Posterior cingulate gyrus (tissue), 11 donors: ENCODE measurements at regions of chr11 and their contacts with region 1.

Region 1: DNA sequence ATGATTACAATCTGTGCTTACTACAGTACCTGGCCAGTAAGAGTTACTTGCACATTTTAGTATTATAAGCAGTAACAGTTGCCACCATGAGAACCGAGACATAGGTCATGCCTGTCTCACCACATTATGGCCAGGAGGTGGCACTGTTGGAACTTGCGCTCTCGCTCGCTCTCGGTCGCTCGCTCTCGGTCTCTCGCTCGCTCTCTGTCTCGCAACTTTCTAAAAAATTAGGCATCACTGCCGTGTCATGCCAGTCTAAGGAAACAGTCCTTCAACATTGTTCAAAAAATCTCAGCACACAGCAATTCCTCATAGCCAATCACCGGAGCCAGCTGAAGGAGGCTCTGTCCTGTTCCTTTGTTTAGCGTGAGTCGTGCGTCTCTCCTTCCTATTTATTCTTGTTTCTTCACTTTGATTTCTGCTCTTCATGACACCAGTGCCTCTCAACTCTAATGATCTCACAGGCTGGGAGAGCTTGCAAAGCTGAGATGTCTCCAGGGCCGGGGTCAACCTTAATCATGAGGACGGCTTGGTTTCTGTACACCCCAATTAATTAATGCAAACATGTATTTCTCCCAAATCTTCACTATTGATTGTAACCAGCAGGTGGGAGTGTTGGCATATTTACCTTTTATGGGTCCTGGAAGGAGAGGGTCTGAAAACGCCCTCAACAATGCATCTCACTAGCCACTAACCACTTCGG is 6.3 kb upstream of the ADAMTS8 start:
- DNase-seq: peak; percentile 67 to 97 (median 79)

Region 2: DNA sequence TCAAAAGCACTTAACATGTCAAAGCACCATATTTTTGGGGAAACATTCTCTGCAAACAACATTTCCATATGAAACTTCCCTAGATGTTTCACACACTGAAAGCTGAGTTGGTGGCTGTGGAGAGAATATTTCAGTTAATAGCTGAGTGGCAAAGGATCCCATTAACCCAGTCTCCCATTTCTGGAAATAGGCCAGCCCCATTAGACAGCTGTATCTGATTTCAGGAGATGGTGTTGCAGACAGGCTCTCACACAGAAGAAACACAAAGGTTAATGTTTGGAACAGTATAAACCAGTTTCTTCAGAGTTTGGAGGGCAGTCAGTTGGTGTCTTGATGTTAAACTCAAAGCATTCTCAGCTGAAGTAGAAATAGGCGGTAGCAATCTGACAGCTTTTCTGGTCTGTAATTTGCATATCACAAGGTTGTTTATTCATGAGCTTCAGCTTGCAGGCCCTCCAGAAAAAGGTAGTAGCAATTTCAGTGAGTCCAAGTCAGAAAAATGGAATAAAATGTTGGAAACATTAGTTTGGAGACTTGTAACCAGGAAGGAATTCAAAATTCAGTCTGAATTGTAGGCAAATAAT is 104.5 kb before region 1 on chr11:
- intact Hi-C with region 1: no loop called
- DNase-seq: no peak

Region 3: GRCh38 chr11:130666781-130667251 is 232.1 kb after region 1 on chr11:
- intact Hi-C with region 1: loop called (anchors 2 kb)
- DNase-seq: peak in 2 of 10 donors; percentile 36 to 66

Region 4: DNA sequence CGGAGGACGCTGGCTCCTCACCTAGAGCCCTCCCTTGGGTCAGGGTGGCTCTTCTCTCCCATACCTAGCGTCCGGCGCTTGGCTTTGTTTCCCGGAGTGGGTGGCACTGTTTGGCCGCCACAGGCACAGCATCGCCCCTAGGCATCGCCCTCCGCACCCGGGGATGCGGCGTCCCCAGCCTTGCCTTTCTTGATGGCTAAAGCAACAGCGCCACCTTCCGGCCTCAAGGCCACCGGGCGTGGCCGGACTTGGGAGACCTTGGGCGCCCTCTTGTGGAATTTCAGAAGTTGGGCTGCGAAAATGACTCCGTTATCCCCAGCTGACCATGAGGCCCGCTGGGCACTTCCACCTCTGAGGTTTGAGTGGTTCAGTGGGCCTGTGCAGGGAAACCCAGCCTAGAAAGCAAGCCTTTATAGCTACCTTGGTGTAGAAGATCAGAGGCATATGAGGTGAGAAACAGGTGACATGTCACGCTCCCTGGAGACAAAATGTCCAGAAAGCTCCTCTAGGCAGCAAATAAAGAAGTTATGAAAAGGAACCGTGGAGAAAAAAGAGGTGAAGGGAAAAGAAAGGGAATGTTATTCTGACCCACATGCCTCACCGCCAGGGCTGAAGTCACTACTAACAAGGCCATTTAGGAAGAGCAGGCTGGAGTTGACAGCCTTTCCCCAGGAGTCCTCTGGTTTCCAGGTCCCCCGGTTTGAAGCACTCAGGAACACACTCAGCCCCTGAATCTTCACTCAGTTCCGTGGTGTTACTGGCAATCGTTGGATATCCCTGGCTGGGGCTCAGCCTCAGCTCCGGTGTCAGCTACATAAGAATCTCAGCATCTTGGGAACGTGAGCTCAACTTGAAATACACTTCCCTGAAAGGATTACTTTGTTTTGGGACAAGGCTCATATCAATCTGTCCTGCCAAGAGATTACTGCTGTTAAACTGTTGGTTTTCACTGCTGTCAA is 427.5 kb after region 1 on chr11:
- intact Hi-C with region 1: loop called (anchors 1 kb)
- DNase-seq: peak; percentile 82 to 98 (median 92)

Region 5: GRCh38 chr11:130894322-130895025 is 459.8 kb after region 1 on chr11:
- intact Hi-C with region 1: loop called (anchors 10 kb)
- DNase-seq: peak; percentile 51 to 96 (median 82)